ENCODE measurements at regions of chr5 and their contacts with region 1.

Region 1: DNA sequence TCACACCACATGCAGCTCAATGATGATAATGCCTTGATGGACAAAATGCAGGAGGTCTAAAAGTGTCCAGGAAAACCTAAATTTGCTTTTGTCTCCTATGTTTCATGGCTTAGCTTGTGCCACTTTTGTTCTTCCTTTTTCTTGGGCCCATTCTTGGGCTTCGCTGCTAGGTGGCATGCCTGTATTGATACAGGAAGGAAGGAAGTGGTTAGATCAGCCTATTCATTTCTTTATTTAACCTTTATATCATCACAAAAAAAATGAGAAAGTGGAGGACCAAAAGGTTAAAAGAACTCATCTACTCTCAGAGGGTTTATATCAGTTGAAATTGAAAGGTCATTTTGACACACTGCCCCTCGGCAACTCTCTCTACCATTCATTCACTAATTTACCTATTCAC is 260.2 kb downstream of the ARHGAP26 start:
- DNase-seq: no peak
- H3K4me3 Mint-ChIP-seq: no peak overlapping the region
- H3K27ac Mint-ChIP-seq: no peak overlapping the region
- H3K4me1 Mint-ChIP-seq: peaks cover 63% of the 10 kb centered on the region
- H3K27me3 Mint-ChIP-seq: peaks cover 2% of the 10 kb centered on the region

Region 2: GRCh38 chr5:143014017-143014651 is 16.2 kb before region 1 on chr5:
- intact Hi-C with region 1: loop called (anchors 1 kb)
- DNase-seq: no peak
- H3K4me3 Mint-ChIP-seq: no peak overlapping the region
- H3K27ac Mint-ChIP-seq: no peak overlapping the region
- H3K4me1 Mint-ChIP-seq: peaks cover 74% of the 10 kb centered on the region
- H3K27me3 Mint-ChIP-seq: no peaks in the 10 kb centered on the region

Region 3: DNA sequence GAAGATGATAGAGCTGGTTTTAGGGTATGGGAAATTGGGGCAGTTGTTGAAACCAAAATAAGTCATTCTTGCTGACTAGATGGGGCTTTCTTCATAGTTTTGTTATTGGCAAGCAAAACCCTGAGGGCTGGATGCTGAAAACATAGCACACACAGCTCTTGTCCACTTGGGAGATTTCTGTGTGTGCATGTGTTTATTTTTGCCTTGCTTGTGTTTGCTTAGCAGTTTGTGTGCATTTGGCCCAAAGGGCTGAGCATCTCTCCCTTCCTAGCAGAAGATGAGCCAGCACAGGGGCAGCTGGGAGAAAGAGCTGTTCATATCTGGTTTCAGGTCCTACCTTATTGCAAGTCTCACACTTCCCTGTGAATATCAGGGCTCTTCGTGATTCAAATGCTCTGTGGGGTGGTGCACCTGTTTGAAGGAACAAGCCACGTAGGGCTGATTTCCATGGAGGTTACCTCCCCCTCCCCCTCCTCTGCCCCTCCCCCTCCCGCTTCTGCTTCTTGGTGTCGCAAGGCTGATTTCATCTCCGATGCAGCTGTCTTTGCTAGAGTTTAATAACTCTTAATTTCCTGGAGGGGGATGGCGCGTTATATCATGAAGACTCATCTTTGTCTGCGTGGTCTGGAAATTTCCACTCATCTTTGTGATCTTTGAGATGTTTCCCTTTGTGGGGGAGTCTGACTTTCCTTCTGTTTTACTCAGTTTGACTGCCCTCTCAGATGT is 36.4 kb after region 1 on chr5:
- intact Hi-C with region 1: loop called (anchors 2 kb)
- DNase-seq: no peak
- H3K4me3 Mint-ChIP-seq: peak overlapping the region; percentile 38
- H3K27ac Mint-ChIP-seq: peak overlapping the region; percentile 78
- H3K4me1 Mint-ChIP-seq: peaks cover 55% of the 10 kb centered on the region
- H3K27me3 Mint-ChIP-seq: no peaks in the 10 kb centered on the region

Region 4: DNA sequence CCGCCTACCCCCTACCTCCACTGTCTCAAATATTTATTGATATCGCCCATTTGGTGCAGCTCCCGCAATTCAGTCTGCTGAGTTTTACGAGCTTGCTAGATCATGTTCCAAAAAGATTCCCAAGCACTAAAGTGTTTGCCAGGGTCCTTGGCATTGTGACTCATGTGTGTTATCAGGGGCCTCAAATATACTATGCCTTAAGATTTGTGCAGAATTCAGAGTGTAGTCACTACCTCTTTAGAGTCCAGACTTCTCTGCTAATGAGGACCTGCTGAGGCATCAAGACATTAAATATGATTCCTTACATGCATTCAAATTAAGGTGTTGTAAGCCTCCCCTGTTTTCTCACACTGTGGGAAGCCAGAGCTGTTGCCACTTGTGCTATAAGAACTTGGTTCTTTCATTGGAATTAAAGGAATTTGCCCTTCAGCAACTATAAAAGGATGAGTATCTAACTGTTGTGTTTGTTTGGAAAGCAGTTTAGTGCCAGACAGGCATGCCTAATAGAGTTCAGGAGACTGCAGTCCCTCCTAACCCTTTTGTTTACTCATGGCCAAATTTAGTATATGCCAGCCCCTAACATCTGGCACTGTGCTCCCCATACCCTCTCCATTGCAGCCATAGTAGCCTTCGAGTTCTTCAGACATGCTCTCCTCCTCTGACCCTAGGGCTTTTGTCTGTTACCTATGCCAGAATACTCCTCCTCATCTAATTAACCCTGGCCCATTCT is 56.7 kb after region 1 on chr5:
- intact Hi-C with region 1: no loop called
- DNase-seq: no peak
- H3K4me3 Mint-ChIP-seq: no peak overlapping the region
- H3K27ac Mint-ChIP-seq: no peak overlapping the region
- H3K4me1 Mint-ChIP-seq: peaks cover 18% of the 10 kb centered on the region
- H3K27me3 Mint-ChIP-seq: no peaks in the 10 kb centered on the region